ENCODE measurements at regions of chr2 and their contacts with region 1.

Region 1: DNA sequence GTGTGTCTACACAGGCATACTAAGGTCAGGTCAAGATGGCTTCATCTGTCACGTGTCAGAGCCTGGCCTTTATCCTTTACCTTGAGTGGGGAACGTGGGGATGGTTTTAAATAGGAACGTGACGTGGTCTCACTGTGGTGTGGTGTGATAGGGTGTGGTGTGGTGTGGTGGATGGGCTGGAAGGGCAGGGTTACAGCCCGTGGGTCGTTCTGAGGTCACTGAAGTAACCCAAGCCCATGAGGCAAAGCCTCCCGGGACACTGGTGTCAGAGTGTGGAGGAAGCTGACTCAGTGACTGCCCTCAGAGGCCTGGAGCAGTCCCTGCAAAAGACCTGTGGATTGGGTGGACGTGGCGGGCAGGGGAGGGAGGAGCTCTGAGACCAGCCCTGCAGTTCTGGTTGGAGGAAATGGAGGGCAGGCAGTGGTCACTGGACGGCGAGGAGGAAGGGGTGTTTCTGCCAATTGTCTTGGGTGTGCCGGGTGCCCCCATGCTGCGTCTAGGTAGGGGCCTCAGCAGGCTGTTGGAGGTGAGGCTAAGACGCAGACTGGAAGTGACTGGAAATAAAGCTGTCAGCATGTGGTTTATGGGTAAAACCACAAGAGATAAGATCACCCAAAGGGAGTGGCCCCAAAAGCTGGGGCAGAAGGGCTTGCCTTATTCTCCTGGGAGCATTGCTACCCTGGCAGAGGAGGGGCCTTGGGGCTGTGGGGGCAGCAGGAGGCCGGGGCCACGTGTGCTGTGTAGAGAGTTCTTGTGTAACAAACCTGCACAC is 84.8 kb downstream of the SH3RF3 start:
- DNase-seq: peak; percentile 94
- H3K4me3 Mint-ChIP-seq: peak overlapping the region; percentile 74
- H3K27ac Mint-ChIP-seq: peak overlapping the region; percentile 84
- H3K4me1 Mint-ChIP-seq: peaks cover 79% of the 10 kb centered on the region
- H3K27me3 Mint-ChIP-seq: peaks cover 55% of the 10 kb centered on the region

Region 2: GRCh38 chr2:108833219-108833618 is 380.6 kb before region 1 on chr2:
- intact Hi-C with region 1: no loop called
- DNase-seq: no peak
- H3K4me3 Mint-ChIP-seq: no peak overlapping the region
- H3K27ac Mint-ChIP-seq: peak overlapping the region; percentile 86
- H3K4me1 Mint-ChIP-seq: peaks cover 20% of the 10 kb centered on the region
- H3K27me3 Mint-ChIP-seq: no peaks in the 10 kb centered on the region

Region 3: DNA sequence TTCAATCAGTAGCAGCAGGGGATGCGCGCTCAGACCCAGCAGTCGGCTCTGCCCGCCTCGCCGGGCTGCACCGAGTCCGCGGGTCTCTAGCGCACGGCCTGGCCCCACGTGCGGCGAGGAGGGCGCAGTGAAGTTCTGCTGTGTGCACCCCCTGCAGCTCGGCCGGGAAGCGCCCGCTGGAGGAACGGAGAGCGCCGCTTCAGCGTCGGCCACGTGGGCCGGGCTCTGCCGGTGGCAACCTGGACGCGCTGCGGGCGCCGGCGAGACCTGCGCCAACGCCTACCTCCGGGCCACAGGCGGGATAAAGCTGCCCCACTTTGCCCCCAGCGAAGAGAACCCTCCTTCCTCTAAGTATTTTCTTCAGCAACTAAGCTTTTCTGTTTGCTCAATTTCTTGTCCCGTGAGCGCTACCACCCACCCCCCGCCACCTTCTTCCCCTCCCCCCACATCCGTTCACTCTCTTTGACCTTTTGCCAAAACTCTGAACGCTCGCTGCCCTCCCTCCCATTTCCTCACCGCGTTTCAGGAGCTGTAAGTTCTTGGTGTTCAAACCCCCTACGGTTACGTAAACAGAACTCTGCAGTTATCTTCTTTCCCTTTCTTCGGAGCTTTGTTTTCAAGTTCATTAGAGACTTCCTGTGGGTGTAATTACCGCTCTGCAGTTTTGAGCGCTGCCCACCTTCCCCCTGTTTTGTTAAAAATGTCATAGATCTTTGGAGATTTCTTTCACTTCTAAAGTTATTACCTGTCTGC is 182.2 kb before region 1 on chr2:
- intact Hi-C with region 1: loop called (anchors 5 kb)
- DNase-seq: peak; percentile 89
- H3K4me3 Mint-ChIP-seq: peak overlapping the region; percentile 92
- H3K27ac Mint-ChIP-seq: peak overlapping the region; percentile 95
- H3K4me1 Mint-ChIP-seq: peaks cover 34% of the 10 kb centered on the region
- H3K27me3 Mint-ChIP-seq: no peaks in the 10 kb centered on the region

Region 4: DNA sequence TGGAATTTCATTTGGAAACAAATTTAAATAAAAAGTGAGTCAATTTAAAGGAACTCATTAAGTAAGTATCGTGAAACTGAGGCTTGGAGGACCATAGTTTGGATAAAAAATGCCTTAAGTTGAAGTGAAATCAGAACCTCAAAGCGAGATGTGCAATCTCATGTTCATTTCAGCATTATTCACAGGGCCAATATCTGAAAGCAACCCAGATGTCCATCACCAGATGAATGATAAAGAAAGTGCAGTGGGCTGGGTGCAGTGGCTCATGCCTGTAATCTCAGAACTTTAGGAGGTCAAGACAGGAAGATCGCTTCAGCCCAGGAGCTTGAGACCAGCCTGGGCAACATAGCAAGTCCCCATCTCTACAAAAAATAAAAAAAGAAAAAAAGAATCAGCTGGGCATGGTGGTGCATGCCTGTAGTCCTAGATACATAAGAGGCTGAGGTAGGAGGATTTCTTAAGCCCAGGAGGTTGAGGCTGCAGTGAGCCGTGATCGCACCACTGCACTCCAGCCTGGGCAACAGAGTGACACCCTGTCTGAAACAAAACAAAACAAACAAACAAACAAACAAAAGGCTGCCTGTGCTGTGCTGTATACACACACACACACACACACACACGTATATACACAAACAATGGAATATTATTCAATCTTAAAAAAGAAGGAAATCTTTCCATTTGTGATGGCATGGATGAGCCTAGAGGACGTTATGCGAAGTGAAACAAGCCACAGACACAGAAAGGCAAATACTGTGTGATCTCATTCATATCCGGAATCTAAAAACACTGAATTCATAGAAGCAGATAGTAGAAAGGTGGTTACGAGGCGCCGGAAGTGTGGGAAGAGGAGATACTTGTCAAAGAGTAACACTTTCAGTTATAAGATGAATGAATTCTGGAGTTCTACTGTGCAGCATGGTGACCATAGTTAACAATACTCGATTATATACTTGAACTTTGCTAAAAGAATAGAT is 70.3 kb before region 1 on chr2:
- intact Hi-C with region 1: loop called (anchors 1 kb)
- DNase-seq: peak; percentile 89
- H3K4me3 Mint-ChIP-seq: peak overlapping the region; percentile 60
- H3K27ac Mint-ChIP-seq: peak overlapping the region; percentile 76
- H3K4me1 Mint-ChIP-seq: peaks cover 42% of the 10 kb centered on the region
- H3K27me3 Mint-ChIP-seq: peaks cover 48% of the 10 kb centered on the region

Region 5: GRCh38 chr2:109341355-109342255 is 127.8 kb after region 1 on chr2:
- intact Hi-C with region 1: loop called (anchors 2 kb)
- DNase-seq: no peak
- H3K4me3 Mint-ChIP-seq: no peak overlapping the region
- H3K27ac Mint-ChIP-seq: no peak overlapping the region
- H3K4me1 Mint-ChIP-seq: peaks cover 14% of the 10 kb centered on the region
- H3K27me3 Mint-ChIP-seq: peaks cover 19% of the 10 kb centered on the region

Region 6: DNA sequence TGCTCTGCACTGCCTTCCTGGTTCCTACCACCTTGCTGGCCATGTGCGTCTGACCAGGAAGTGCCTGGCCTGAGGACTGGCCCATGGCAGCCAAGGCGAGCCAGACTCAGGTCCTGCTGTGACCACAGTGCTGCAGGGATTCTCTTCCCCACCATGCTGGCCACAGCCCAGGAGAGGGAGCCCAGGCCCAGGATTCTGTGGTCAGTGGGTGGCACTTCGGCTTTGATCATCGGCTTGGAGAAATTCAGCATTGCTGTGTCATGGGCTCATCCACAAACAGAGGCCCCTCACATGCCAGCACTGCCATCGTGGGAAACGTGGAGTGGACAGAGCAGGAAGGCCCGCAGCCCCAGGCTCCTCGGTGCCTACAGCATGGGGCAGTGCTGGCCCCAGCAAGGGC is 188.3 kb after region 1 on chr2:
- intact Hi-C with region 1: no loop called
- DNase-seq: no peak
- H3K4me3 Mint-ChIP-seq: no peak overlapping the region
- H3K27ac Mint-ChIP-seq: no peak overlapping the region
- H3K4me1 Mint-ChIP-seq: peaks cover 6% of the 10 kb centered on the region
- H3K27me3 Mint-ChIP-seq: peaks cover 2% of the 10 kb centered on the region

Region 7: DNA sequence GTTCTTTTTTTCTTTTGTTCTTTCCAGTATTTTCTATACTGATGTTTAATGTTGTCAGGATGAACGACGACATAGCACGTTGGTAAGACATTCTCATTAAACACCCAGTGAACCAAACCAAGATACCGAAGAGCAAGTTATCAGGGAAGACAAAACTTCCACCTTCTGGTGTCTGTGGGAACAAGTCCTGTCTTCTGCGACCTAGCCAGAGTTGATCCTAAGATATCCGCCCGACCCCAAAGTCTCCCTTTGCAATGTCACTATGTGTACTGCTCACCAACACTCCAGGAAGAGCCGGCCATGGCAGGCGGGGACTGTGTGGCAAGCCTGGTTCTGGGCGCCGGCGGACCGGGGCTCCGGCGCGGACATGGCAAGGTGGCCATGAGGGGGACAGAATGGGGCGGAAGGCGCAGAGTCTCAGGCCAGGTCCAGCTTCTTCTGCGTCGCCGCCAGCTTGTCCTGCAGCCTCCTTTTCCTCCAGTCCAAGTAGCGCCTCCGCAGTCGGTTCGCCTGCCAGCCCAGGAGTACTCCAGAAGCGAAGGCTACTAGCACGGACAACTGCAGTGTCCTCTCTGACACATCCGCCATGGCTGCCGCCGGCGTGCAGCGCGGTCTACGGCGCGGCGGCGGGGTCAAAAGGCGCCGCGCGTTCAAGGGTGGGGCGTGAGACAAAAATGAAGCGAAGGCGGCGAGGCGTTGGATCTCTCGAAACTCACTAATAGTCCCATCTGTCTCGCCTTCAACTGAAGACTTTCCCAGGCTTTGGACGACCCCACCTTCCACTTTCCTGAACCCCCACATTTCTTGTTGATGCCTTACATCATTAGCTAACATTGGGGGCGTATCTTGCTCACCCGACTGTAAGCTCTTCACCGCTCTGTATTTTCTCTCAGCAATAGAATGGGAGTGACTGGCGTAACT is 998.4 kb after region 1 on chr2 and contains the start of gene MTLN:
- intact Hi-C with region 1: loop called (anchors 5 kb)
- DNase-seq: peak; percentile 93
- H3K4me3 Mint-ChIP-seq: peak within 1 kb of the TSS; percentile 92
- H3K27ac Mint-ChIP-seq: peak within 1 kb of the TSS; percentile 91
- H3K4me1 Mint-ChIP-seq: peaks cover 8% of the 10 kb centered on the region
- H3K27me3 Mint-ChIP-seq: peaks cover 22% of the 10 kb centered on the region
- total RNA-seq, gene MTLN: 71.9 and 80.1 TPM in 2 replicates

Measured in activated CD4-positive, alpha-beta T cell treated with anti-CD3 and anti-CD28 coated beads, Interleukin-2, amount 10 ng/mL, durations not matched to agents 24 days and 14 days (primary cell).